ENCODE measurements at regions of chr3 and their contacts with region 1.

Region 1: DNA sequence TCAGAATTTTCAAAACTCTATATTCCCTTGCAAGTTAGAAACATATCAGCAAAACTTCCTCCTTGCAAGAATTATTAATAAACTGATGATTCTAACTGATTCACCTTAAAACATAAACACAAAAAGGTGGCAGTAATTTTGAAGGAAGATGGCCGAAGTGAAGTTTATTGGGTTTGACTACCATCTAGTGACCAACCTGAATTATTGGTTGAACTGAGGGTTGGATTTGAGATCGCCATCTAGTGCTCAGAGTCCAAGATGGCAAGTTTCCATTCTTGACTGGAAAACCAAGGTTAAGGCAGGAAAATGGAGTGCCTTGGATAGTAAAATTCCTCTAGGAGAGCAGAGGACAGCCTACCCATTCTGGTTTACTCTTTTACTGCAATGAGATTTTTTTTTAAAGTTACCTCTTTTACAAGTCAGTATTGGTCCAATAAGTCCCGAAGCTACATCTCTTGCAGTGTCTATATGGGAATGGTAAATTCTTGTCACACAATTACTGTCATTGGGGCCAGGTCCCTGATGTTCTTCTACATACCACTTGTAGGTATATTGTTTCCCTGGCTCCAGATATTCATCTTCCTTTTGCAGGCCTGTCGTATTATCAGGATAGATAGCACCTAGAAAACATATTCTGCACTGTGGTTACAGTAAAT is 51.6 kb upstream of the CP start:
- DNase-seq: peak; percentile 86
- H3K4me3 ChIP-seq: no peak overlapping the region
- H3K27ac ChIP-seq: no peak overlapping the region
- H3K4me1 ChIP-seq: peaks cover 3% of the 10 kb centered on the region
- H3K27me3 ChIP-seq: no peaks in the 10 kb centered on the region
- CTCF ChIP-seq: peak; percentile 78 to 91
- POLR2A ChIP-seq: no peak

Region 2: GRCh38 chr3:148790851-148791735 is 482.1 kb before region 1 on chr3:
- CTCF ChIA-PET with region 1: no interaction called
- POLR2A ChIA-PET with region 1: no interaction called
- dilution Hi-C with region 1: no loop called
- intact Hi-C with region 1: no loop called
- DNase-seq: no peak
- H3K4me3 ChIP-seq: no peak overlapping the region
- H3K27ac ChIP-seq: no peak overlapping the region
- H3K4me1 ChIP-seq: no peaks in the 10 kb centered on the region
- H3K27me3 ChIP-seq: peaks cover 0 to 5% of the 10 kb centered on the region in 2 experiments
- CTCF ChIP-seq: no peak
- POLR2A ChIP-seq: no peak

Region 3: GRCh38 chr3:149120051-149120972 is 152.9 kb before region 1 on chr3:
- CTCF ChIA-PET with region 1: interaction called, 105 read pairs
- POLR2A ChIA-PET with region 1: no interaction called
- dilution Hi-C with region 1: no loop called
- intact Hi-C with region 1: loop called (anchors 1 kb)
- DNase-seq: peak; percentile 80
- H3K4me3 ChIP-seq: no peak overlapping the region
- H3K27ac ChIP-seq: no peak overlapping the region
- H3K4me1 ChIP-seq: no peaks in the 10 kb centered on the region
- H3K27me3 ChIP-seq: no peaks in the 10 kb centered on the region
- CTCF ChIP-seq: peak; percentile 21 to 39
- POLR2A ChIP-seq: no peak

Region 4: GRCh38 chr3:149199474-149199873 is 73.8 kb before region 1 on chr3:
- CTCF ChIA-PET with region 1: no interaction called
- POLR2A ChIA-PET with region 1: no interaction called
- dilution Hi-C with region 1: no loop called
- intact Hi-C with region 1: loop called (anchors 5 kb)
- DNase-seq: peak; percentile 82
- H3K4me3 ChIP-seq: no peak overlapping the region
- H3K27ac ChIP-seq: no peak overlapping the region
- H3K4me1 ChIP-seq: peaks cover 8% of the 10 kb centered on the region
- H3K27me3 ChIP-seq: peaks cover 0 to 2% of the 10 kb centered on the region in 2 experiments
- CTCF ChIP-seq: no peak
- POLR2A ChIP-seq: no peak

Region 5: GRCh38 chr3:149339931-149340309 is 66.7 kb after region 1 on chr3:
- CTCF ChIA-PET with region 1: no interaction called
- POLR2A ChIA-PET with region 1: no interaction called
- dilution Hi-C with region 1: no loop called
- intact Hi-C with region 1: loop called (anchors 1 kb)
- DNase-seq: peak; percentile 99
- H3K4me3 ChIP-seq: peak overlapping the region in 1 of 3 experiments; percentile 45
- H3K27ac ChIP-seq: peak overlapping the region; percentile 99
- H3K4me1 ChIP-seq: peaks cover 54% of the 10 kb centered on the region
- H3K27me3 ChIP-seq: no peaks in the 10 kb centered on the region
- CTCF ChIP-seq: no peak
- POLR2A ChIP-seq: peak; percentile 88

Region 6: DNA sequence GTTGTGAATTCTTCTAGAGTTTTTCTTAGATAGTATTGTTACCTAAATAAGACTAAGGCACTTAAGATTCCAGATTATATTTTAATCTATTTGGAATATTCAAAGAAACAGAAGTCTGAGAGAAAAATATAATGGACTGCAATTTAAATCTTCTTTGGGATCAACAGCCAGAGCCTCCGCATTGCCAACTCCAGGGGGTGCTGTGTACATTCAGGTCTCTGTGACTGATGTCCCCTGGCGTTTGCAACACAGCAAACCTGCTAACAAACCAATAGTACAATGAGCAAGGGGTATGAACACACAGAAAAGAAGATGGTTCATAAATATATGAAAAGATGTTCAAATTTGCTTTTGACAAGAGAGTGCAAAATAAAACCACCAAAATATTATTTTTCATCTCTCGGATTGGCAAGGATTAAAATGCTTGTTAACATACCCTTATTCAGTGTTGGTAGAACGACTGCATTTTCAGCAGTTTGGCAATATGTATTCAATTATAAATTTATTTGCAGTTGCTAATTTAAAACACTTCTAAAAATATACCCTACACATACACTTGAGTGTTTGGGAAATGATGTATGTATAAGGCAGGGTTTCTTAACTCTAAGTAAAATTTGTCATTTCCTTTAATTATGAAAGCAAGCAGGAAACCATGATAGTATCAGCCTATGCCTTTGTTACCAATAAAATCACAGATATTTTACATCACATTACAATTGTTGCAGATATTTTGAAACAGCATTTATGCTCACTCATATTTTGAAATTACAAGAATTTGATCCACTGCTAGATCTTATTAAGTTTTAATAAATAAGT is 120.3 kb after region 1 on chr3:
- CTCF ChIA-PET with region 1: no interaction called
- POLR2A ChIA-PET with region 1: no interaction called
- dilution Hi-C with region 1: no loop called
- intact Hi-C with region 1: loop called (anchors 1 kb)
- DNase-seq: peak; percentile 88
- H3K4me3 ChIP-seq: peak overlapping the region in 1 of 3 experiments; percentile 21
- H3K27ac ChIP-seq: peak overlapping the region; percentile 90
- H3K4me1 ChIP-seq: peaks cover 31% of the 10 kb centered on the region
- H3K27me3 ChIP-seq: no peaks in the 10 kb centered on the region
- CTCF ChIP-seq: peak; percentile 84
- POLR2A ChIP-seq: no peak

Region 7: DNA sequence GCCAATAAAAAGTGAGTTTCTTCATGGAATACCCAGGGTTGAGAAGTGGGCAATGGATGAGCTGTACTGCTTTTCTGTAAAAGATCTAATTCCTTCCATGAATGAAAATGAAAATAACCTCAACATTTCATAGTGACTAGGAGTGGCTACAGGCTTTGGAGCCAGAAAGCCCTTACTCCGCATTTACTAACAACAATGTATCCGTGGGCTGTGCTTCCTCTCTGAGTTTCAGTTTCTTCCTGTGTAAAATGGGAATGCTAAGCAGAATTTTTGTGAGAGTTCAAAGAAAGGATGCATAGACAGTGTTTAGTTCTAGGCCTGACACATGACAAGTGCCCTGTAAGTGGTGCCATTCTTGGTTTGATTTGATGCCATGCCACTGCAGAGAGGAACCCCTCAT is 151.7 kb after region 1 on chr3:
- CTCF ChIA-PET with region 1: no interaction called
- POLR2A ChIA-PET with region 1: no interaction called
- dilution Hi-C with region 1: no loop called
- intact Hi-C with region 1: no loop called
- DNase-seq: peak; percentile 56
- H3K4me3 ChIP-seq: no peak overlapping the region
- H3K27ac ChIP-seq: no peak overlapping the region
- H3K4me1 ChIP-seq: peaks cover 5% of the 10 kb centered on the region
- H3K27me3 ChIP-seq: no peaks in the 10 kb centered on the region
- CTCF ChIP-seq: no peak
- POLR2A ChIP-seq: no peak

Region 8: GRCh38 chr3:149442851-149443544 is 169.8 kb after region 1 on chr3:
- CTCF ChIA-PET with region 1: no interaction called
- POLR2A ChIA-PET with region 1: no interaction called
- dilution Hi-C with region 1: no loop called
- intact Hi-C with region 1: no loop called
- DNase-seq: peak; percentile 77
- H3K4me3 ChIP-seq: no peak overlapping the region
- H3K27ac ChIP-seq: no peak overlapping the region
- H3K4me1 ChIP-seq: peaks cover 16% of the 10 kb centered on the region
- H3K27me3 ChIP-seq: no peaks in the 10 kb centered on the region
- CTCF ChIP-seq: no peak
- POLR2A ChIP-seq: no peak

Region 9: DNA sequence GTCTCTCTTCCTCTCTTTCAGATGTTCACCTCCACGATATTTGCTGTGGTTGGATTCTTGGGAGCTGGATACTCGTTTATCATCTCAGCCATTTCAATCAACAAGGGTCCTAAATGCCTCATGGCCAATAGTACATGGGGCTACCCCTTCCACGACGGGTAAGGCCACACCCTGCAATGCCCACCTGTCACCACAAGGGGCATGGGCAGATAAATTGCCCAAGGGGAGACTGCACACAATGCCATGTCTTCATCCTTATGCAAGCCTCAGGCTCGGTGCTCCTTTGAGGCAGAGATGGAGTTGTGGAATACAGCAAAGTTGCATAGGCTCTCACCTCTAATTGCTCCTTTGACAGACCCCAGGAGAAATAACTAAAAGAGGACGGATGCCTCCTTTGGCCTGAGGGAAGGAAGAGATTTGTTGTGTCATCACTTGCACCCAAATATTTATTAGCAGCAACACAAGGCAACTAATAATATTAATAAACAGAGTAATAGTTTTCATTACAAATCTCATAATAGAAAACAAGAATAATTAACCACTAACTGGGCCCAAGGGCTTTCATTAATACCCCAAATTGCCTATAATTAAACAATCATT is 214.5 kb after region 1 on chr3:
- CTCF ChIA-PET with region 1: interaction called, 11 read pairs
- POLR2A ChIA-PET with region 1: no interaction called
- dilution Hi-C with region 1: no loop called
- intact Hi-C with region 1: loop called (anchors 2 kb)
- DNase-seq: no peak
- H3K4me3 ChIP-seq: no peak overlapping the region
- H3K27ac ChIP-seq: no peak overlapping the region
- H3K4me1 ChIP-seq: peaks cover 3% of the 10 kb centered on the region
- H3K27me3 ChIP-seq: no peaks in the 10 kb centered on the region
- CTCF ChIP-seq: peak; percentile 40 to 53
- POLR2A ChIP-seq: no peak

Measured in endothelial cell of umbilical vein (primary cell).